HEK293 (cell line): ENCODE measurements at regions of chr12 and their contacts with region 1.

Region 1: GRCh38 chr12:27014085-27014858 is at the start of gene TM7SF3:
- H3K4me3 ChIP-seq: peak within 1 kb of the TSS; percentile 76
- H3K27ac ChIP-seq: peak within 1 kb of the TSS; percentile 47
- H3K4me1 ChIP-seq: peaks cover 6% of the 10 kb centered on the region; the same call in 1 of the 2 replicates
- CTCF ChIP-seq: peak; percentile 71

Region 2: GRCh38 chr12:26686408-26686807 is 327.9 kb before region 1 on chr12:
- CTCF ChIA-PET with region 1: no interaction called
- POLR2A ChIA-PET with region 1: no interaction called
- H3K4me3 ChIP-seq: no peak overlapping the region
- H3K27ac ChIP-seq: no peak overlapping the region
- H3K4me1 ChIP-seq: no peaks in the 10 kb centered on the region; the same call in 1 of the 2 replicates
- CTCF ChIP-seq: no peak

Region 3: DNA sequence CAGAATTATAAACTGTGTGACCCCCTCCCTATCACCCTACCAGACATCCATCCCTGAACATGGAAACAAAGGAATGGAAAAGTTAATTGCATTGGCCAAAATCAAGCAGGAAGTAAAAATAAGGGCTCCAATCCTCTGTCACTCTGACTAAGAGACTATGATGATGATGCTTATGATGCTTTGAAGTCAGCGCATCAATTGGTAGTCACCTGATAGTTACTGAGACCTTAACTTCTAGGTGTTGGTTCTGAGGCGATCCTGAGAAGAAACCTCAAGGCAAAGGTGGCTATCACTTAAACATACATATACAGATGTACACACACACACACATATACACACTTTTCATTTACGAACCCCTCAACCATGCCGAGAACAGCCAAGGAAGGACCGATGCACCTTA is 187.8 kb before region 1 on chr12:
- CTCF ChIA-PET with region 1: no interaction called
- POLR2A ChIA-PET with region 1: no interaction called
- H3K4me3 ChIP-seq: no peak overlapping the region
- H3K27ac ChIP-seq: no peak overlapping the region
- H3K4me1 ChIP-seq: peaks cover 13% of the 10 kb centered on the region
- CTCF ChIP-seq: no peak

Region 4: DNA sequence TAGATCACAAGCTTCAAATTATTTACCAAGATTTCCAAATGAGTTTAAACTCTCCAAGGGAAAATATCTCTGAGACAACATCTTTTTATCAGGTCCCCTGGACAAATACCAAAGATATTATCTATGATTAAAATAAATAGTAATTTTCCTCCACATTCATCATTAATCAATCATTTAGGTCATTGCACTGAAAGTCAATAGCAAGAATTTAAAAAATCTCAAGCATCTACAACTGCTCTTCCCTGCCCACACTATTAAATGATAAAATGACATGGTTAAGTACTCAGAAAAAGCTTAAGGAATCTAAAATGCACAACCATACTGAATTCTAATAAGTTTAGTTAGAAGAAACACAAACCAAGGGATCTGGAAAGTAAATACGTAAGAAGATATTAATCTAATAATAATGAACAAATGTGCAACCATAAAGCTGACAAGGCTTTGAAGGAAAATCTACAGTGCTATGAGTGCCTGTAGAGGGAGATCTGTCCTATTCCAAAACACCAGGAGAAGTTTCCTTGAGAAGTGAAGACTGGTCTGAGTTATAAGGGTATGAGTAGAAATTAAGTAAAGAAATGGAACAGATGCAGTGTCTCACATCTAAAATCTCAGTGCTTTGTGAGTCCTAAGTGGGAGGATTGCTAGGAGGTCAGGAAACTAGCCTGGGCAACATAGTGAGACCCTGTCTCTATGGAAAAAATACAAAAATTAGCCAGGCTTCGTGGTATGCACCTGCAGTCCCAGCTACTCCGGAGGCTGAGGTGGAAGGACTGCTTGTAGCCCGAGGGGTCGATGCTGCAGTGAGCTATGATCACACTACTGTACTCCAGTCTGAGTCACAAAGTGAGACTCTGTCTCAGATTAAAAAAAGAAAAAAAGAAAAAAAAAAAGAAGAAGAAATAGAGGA is 95.7 kb before region 1 on chr12:
- CTCF ChIA-PET with region 1: interaction called, 10 read pairs
- POLR2A ChIA-PET with region 1: no interaction called
- H3K4me3 ChIP-seq: no peak overlapping the region
- H3K27ac ChIP-seq: no peak overlapping the region
- H3K4me1 ChIP-seq: no peaks in the 10 kb centered on the region
- CTCF ChIP-seq: 0 out of 2 replicates have a peak, but pooled peaks have one; percentile 11

Region 5: GRCh38 chr12:27003421-27004381 is 10.6 kb before region 1 on chr12:
- CTCF ChIA-PET with region 1: interaction called, 11 read pairs
- POLR2A ChIA-PET with region 1: interaction called, 7 read pairs
- H3K4me3 ChIP-seq: no peak overlapping the region
- H3K27ac ChIP-seq: no peak overlapping the region
- H3K4me1 ChIP-seq: peaks cover 13% of the 10 kb centered on the region; the same call in 1 of the 2 replicates
- CTCF ChIP-seq: no peak

Region 6: DNA sequence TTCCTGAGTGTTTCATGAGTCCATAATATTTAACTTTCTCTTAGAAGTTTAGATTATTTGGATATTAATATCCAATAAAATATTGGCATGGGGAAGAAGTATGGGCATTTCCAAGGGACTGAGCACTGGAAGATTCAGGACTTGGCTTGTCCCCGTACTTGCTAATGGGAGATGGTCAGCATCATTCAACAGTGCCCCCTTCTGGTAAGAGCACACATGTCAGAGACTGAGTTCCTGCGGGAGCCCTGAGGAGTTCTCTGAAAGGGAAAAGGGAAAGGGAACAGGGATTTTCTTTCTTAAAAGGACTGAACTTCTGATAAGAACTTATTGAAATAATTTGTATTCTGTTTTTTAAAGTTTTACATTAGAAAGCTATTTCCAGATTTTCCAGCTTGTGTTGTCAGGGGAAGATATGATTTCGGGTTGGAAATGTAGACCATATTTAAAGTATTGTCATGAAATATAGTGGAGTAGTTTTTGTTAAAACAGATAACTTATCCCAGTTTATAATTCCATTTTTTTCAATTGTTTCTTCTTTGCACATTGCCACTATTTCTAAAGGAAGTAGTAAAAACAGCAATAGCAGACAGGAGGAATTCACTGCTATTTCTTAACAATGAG is 127.9 kb after region 1 on chr12:
- CTCF ChIA-PET with region 1: interaction called, 10 read pairs
- POLR2A ChIA-PET with region 1: no interaction called
- H3K4me3 ChIP-seq: no peak overlapping the region
- H3K27ac ChIP-seq: no peak overlapping the region
- H3K4me1 ChIP-seq: no peaks in the 10 kb centered on the region
- CTCF ChIP-seq: peak; percentile 33; the same call in 1 of the 2 replicates

Region 7: DNA sequence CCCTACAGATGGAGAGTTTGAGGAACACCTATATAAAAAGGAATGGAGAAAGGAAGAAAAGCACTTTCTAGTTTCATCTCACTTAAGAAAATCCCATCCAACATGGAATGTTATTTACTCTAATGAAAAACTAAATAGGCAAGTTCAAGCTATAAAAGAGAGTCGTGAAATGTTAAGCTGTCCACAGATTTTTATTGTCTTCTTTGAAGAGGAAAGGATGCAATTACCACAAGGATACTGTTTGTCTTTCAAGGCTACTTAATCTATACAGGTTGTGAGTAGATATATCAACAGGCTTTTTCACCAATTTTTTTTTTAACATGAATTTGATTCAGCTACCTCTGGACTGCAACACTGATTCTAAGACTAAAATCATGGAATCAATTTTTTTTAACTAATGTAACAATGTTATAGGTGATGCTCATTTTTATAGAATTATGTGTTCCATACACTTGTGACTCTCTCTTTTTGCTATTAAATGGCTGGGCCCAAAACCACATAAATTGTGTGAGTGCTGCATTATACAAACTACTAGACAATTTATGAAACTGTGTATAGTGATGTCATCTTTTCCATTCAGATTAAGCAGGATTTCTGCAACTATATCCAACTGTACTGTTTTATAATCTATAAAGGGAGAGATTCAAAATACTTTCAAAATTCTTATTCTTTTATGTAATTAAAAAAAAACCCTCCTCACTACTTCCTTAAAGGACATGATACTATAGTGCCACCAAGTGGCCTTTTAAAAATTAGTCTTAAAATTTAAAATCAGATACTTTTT is 291.6 kb after region 1 on chr12:
- CTCF ChIA-PET with region 1: interaction called, 65 read pairs
- POLR2A ChIA-PET with region 1: interaction called, 4 read pairs
- H3K4me3 ChIP-seq: no peak overlapping the region
- H3K27ac ChIP-seq: 0 out of 2 replicates have a peak overlapping the region, but pooled peaks have one; percentile 16
- H3K4me1 ChIP-seq: peaks cover 13% of the 10 kb centered on the region
- CTCF ChIP-seq: no peak